Naive thymus-derived CD4-positive, alpha-beta T cell (primary cell): ENCODE measurements at regions of chr4 and their contacts with region 1.

Region 1: DNA sequence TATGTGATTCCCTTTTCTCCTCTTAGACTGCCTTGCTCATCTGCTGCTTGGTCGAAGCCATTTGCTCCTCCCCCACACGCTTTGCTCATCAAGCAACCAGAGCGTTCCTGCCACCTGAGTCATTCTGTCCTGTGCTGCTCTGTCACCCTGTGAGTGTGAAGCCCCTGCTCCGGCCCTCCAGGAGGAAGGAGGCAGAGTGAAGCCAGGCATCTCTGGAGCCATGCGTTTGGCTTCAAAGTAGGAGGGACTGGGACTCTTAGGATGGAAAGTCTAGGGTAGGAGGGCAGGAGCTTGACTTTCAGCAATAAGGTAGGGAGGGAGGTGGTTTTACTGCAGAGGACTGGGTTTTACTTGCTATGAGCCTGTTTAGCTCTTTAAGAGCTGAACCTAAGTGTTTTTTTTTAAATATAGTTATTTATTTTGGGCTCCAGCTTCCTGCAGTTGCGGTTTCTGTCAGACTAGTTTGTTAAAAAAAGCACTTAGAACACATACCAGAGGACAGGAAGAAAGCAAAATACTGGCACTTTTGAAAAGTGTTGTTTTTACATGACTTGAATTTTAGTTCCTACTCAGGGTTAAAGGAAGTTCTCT is 63.6 kb downstream of the SPINK2 start:
- DNase-seq: peak; percentile 12 to 85 (median 68)
- ATAC-seq: peak; percentile 88
- H3K4me3 ChIP-seq: peak overlapping the region; percentile 46
- H3K4me3 Mint-ChIP-seq: peak overlapping the region; percentile 71 to 91 (median 85)
- H3K27ac ChIP-seq: peak overlapping the region; percentile 65
- H3K27ac Mint-ChIP-seq: peak overlapping the region; percentile 76 to 99 (median 92)
- H3K4me1 ChIP-seq: peaks cover 28 to 29% of the 10 kb centered on the region in 2 donors
- H3K4me1 Mint-ChIP-seq: peaks cover 39 to 76% (median 57%) of the 10 kb centered on the region in 7 donors
- H3K27me3 ChIP-seq: no peaks in the 10 kb centered on the region
- H3K27me3 Mint-ChIP-seq: peaks cover 0 to 14% (median 0%) of the 10 kb centered on the region in 5 donors

Region 2: GRCh38 chr4:56220261-56220660 is 537.7 kb before region 1 on chr4:
- CTCF ChIA-PET with region 1: no interaction called
- POLR2A ChIA-PET with region 1: no interaction called
- intact Hi-C with region 1: no loop called
- DNase-seq: no peak
- ATAC-seq: no peak
- H3K4me3 ChIP-seq: no peak overlapping the region
- H3K4me3 Mint-ChIP-seq: no peak overlapping the region
- H3K27ac ChIP-seq: no peak overlapping the region
- H3K27ac Mint-ChIP-seq: no peak overlapping the region
- H3K4me1 ChIP-seq: no peaks in the 10 kb centered on the region
- H3K4me1 Mint-ChIP-seq: no peaks in the 10 kb centered on the region
- H3K27me3 ChIP-seq: no peaks in the 10 kb centered on the region
- H3K27me3 Mint-ChIP-seq: peaks cover 0 to 11% (median 6%) of the 10 kb centered on the region in 5 donors

Region 3: DNA sequence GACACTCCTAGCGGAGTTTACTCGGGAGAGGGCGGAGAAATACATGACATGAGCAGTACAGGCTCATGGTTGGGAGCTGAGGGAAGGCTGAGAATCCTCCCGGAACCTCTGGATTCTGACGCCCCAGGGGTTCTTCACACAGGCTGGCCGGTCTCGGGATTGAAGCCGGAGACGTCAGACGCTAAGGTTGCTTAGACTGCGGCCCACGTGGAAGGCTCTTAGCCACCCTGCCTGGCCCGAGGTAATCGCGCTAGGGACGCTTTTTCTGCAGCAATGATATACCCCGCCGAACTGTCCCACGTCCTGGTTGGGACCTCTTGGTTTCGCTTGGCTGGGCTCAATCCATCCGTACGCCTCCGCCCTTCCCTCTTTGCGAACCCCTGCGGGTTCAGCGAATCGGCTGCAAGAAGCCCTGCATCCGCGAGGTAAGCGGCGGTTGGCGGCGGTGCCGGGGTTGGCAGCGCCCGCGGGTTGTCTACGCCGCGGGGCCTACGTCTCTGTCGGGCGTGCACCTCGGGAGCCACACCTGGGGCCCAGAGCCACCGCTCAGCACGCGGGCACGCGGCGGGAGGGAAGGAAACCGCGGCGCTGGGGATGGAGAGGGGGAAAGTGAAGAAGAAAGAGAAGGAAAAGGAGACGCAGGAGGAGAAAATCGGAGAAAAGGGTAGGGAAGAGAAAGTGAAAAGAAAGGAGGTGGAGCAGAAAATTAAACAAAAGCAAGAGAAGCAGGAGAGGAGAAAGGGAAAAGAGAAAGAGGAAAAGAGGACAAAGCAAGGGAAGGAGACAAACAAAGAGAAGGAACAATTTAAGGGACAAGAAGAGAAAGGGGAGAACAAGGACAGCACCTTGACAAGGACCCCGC is 252.4 kb before region 1 on chr4 and contains the start of gene ARL9:
- CTCF ChIA-PET with region 1: no interaction called
- POLR2A ChIA-PET with region 1: no interaction called
- intact Hi-C with region 1: loop called in 1 of 2 experiments (anchors 5 kb)
- DNase-seq: peak; percentile 49 to 77 (median 68)
- ATAC-seq: peak; percentile 96
- H3K4me3 ChIP-seq: peak within 1 kb of the TSS; percentile 67
- H3K4me3 Mint-ChIP-seq: peak within 1 kb of the TSS; percentile 66 to 96 (median 88)
- H3K27ac ChIP-seq: peak within 1 kb of the TSS; percentile 44
- H3K27ac Mint-ChIP-seq: peak within 1 kb of the TSS in 8 of 9 donors; percentile 49 to 88 (median 72)
- H3K4me1 ChIP-seq: peaks cover 7 to 8% of the 10 kb centered on the region in 2 donors
- H3K4me1 Mint-ChIP-seq: peaks cover 13 to 20% (median 17%) of the 10 kb centered on the region in 7 donors
- H3K27me3 ChIP-seq: no peaks in the 10 kb centered on the region
- H3K27me3 Mint-ChIP-seq: peaks cover 0 to 12% (median 0%) of the 10 kb centered on the region in 5 donors
- total RNA-seq, gene ARL9: 0.19 to 0.43 TPM in 2 of 5 experiments, not detected in the others

Region 4: DNA sequence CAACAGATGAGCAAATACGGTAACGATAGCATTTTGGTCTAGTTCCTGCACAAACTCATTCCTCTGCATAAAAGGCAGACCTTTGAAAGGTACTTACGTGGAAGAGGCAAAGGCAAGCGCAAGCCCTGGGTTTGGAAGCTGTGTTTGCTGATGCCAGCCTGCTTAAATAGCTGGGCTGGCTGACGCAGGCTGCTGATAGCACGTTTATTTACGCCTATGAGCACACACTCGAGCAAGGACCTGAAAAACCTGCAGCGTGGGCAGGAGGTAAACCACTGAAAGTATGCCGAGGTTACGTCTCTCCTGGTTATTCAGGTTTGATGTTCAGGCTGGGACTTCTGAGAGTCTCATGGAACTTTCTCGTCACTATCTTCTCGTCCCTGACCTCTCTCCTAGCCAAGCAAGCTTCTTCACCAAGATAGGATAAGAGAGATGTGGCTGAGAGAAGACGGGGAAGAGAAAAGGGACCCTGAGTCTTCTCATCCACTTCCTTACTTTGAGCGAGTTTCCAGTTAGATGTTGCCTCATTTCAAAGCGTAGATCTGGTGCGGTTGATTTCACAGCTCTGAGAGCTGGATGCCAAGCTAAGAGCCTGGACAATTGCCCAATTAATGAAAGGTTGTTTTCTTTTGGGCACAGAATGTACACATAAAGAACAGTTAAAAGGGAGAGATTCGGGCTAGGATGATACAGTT is 76.6 kb before region 1 on chr4 and contains the start of gene HOPX:
- CTCF ChIA-PET with region 1: no interaction called
- POLR2A ChIA-PET with region 1: no interaction called
- intact Hi-C with region 1: loop called (anchors 5 to 10 kb)
- DNase-seq: peak in 7 of 9 donors; percentile 30 to 72 (median 50)
- ATAC-seq: peak; percentile 84
- H3K4me3 ChIP-seq: peak within 1 kb of the TSS; percentile 34
- H3K4me3 Mint-ChIP-seq: peak within 1 kb of the TSS; percentile 53 to 84 (median 72)
- H3K27ac ChIP-seq: no peak within 1 kb of the TSS
- H3K27ac Mint-ChIP-seq: peak within 1 kb of the TSS in 6 of 9 donors; percentile 28 to 91 (median 48)
- H3K4me1 ChIP-seq: peaks cover 0 to 6% of the 10 kb centered on the region in 2 donors
- H3K4me1 Mint-ChIP-seq: peaks cover 12 to 21% (median 14%) of the 10 kb centered on the region in 7 donors
- H3K27me3 ChIP-seq: no peaks in the 10 kb centered on the region
- H3K27me3 Mint-ChIP-seq: peaks cover 13 to 51% (median 19%) of the 10 kb centered on the region in 5 donors
- total RNA-seq, gene HOPX: 0.84 to 46.3 (median 5.5) TPM

Region 5: DNA sequence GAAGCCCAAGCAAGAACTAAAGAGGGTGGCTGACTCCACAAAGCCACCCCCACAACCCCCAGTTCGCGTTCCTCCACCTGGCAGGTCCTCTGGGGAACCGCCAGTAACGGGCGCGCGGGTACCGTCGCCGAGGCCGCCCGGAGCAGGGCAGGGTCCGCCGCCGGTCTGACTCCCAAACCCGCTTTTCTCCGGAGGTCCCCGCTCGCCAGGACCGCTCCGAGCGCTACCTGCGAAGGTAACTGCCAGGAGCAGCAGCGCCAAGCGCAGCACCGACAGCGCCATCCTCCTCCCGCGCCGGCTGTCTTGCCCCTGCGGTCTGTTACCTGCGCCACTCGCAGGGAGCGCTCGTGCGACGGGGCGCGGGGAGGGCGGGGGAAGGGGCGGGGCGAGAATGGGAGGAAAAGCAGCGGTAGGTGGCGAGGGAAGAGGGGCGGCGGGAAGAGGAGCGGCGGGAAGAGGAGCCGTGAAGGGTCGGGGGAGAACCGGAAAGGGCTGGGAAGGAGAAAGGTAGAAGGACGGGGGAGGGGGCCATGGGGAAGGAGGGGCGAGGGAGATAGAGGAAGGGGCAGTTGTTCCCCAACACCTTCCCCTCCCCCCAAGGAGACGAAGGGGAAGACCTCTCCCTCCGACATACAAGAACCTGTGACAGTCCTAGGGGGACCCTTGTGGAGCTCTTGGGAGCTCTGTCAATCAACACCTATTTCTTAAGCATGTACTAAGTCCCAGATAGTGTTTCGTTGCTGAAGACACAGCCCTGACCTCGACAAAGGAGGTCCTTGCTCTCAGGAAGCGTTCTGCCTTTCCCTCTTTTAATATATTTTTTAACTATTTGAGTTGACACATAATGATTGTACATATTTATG is 63.7 kb after region 1 on chr4 and contains the start of gene SPINK2:
- CTCF ChIA-PET with region 1: no interaction called
- POLR2A ChIA-PET with region 1: no interaction called
- intact Hi-C with region 1: loop called in 1 of 2 experiments (anchors 1 kb)
- DNase-seq: peak; percentile 49 to 76 (median 68)
- ATAC-seq: peak; percentile 95
- H3K4me3 ChIP-seq: peak within 1 kb of the TSS; percentile 68
- H3K4me3 Mint-ChIP-seq: peak within 1 kb of the TSS; percentile 44 to 86 (median 80)
- H3K27ac ChIP-seq: no peak within 1 kb of the TSS
- H3K27ac Mint-ChIP-seq: peak within 1 kb of the TSS in 6 of 9 donors; percentile 57 to 79 (median 71)
- H3K4me1 ChIP-seq: peaks cover 12 to 17% of the 10 kb centered on the region in 2 donors
- H3K4me1 Mint-ChIP-seq: peaks cover 16 to 41% (median 35%) of the 10 kb centered on the region in 7 donors
- H3K27me3 ChIP-seq: no peaks in the 10 kb centered on the region
- H3K27me3 Mint-ChIP-seq: peaks cover 0 to 56% (median 0%) of the 10 kb centered on the region in 5 donors
- total RNA-seq, gene SPINK2: 0.99 to 5.8 (median 4.4) TPM